WTC11 (cell line): ENCODE measurements at regions of chr6 and their contacts with region 1.

Region 1: DNA sequence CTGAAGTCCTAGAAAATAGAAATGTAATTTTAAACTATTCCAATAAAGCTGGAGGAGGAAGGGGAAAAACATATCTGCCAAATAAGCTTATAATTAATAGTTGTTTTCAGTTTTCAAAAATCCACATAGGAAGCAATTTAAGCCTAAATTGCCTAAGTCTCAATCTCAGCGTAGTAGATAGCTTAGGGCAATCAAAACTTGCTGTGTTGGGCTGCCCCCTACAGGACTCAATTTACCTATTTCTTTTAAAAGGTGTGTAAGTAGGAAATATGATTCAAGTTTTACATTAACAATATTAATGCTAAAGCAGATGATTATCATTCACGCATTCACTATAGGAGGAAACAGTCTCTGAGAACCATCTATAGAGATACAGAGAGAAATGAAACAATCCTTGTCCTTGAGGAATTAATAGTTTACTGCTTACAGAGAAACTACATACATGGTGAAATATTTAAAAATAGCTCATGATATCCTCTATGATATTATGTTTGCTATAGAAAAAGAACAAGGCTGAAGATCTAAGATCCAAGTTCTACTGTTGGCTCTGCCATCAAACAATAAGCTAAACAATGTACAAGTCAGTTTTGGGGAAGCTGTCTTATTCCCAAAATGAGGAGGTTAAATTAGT is 102.1 kb downstream of the ATG5 start:
- DNase-seq: peak; percentile 47
- ATAC-seq: peak; percentile 60
- H3K4me3 Mint-ChIP-seq: no peak overlapping the region
- H3K27ac Mint-ChIP-seq: no peak overlapping the region
- H3K4me1 Mint-ChIP-seq: peaks cover 4% of the 10 kb centered on the region
- H3K27me3 Mint-ChIP-seq: no peaks in the 10 kb centered on the region
- CTCF ChIP-seq: peak; percentile 58

Region 2: GRCh38 chr6:106141441-106142237 is 81.8 kb before region 1 on chr6:
- CTCF ChIA-PET with region 1: interaction called, 11 read pairs
- POLR2A ChIA-PET with region 1: no interaction called
- DNase-seq: no peak
- ATAC-seq: no peak
- H3K4me3 Mint-ChIP-seq: no peak overlapping the region
- H3K27ac Mint-ChIP-seq: no peak overlapping the region
- H3K4me1 Mint-ChIP-seq: peaks cover 29% of the 10 kb centered on the region
- H3K27me3 Mint-ChIP-seq: no peaks in the 10 kb centered on the region
- CTCF ChIP-seq: no peak

Region 3: GRCh38 chr6:106194949-106195921 is 28.2 kb before region 1 on chr6:
- CTCF ChIA-PET with region 1: interaction called, 13 read pairs
- POLR2A ChIA-PET with region 1: no interaction called
- DNase-seq: no peak
- ATAC-seq: no peak
- H3K4me3 Mint-ChIP-seq: no peak overlapping the region
- H3K27ac Mint-ChIP-seq: no peak overlapping the region; the same call in 1 of the 2 replicates
- H3K4me1 Mint-ChIP-seq: peaks cover 28% of the 10 kb centered on the region
- H3K27me3 Mint-ChIP-seq: no peaks in the 10 kb centered on the region
- CTCF ChIP-seq: no peak